WTC11 (cell line): ENCODE measurements at regions of chr10 and their contacts with region 1.

Region 1: DNA sequence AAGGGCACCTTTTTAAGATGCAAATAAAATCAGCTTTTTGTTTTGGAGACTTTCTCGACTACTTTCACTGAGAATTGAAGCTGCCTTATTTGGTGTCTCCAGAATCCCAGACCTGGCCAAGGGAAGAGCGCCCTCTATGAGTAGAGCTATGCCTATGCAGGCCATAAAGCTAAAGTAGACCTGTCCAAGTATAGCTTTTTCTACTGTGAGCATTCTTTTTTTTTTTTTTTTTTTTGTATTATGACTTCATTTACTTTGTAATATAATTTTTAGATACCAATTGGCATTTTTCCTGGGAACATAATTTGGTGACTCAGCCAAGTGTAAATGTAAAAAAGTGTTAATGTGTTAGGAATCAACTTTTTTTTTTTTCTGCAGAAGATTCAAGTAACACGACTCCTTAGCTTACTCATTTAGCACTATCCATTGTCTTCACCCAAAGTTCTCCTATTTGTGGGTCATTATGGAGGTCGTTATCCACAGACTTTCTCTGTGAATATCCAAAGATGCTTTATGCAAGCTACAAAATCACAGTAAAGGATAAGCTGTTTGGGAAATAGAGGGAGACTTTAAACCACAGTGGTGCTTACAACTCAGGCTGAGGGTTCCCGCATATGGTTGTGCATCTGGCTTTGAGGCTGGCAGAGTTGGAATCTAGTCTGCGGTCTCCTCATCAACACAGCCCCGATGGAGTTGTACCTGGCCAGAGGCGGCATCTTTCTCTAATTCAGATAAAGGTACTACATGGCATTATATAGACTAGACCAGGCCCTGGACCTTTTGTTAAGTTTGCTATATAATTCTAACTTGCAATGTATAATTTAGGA is 1040.2 kb upstream of the SORCS1 start:
- DNase-seq: peak; percentile 38
- ATAC-seq: peak; percentile 97
- H3K4me3 Mint-ChIP-seq: no peak overlapping the region
- H3K27ac Mint-ChIP-seq: no peak overlapping the region; the same call in 1 of the 2 replicates
- H3K4me1 Mint-ChIP-seq: peaks cover 18% of the 10 kb centered on the region
- H3K27me3 Mint-ChIP-seq: no peaks in the 10 kb centered on the region
- CTCF ChIP-seq: peak; percentile 85

Region 2: DNA sequence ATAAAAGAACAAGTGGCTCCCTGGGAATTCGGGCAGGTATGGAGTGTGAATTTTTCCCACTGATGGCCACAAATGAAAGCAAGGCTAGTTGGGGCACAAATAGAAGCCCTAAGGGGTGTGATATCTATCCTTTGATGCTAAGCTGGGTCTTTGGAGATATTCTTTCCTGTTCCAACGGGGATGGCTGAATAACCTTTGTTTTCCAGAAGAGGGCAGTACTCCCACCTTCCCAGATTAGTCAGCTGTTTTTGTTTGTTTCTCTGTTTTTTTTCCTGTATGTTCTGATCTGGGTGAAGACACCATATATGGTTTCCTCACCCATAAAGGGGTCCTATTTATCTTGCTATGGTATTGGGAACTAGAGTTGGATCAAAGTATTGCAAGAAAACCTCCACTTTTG is 92.5 kb before region 1 on chr10:
- CTCF ChIA-PET with region 1: interaction called, 59 read pairs
- POLR2A ChIA-PET with region 1: no interaction called
- DNase-seq: no peak
- ATAC-seq: peak; percentile 80
- H3K4me3 Mint-ChIP-seq: no peak overlapping the region
- H3K27ac Mint-ChIP-seq: no peak overlapping the region
- H3K4me1 Mint-ChIP-seq: peaks cover 26% of the 10 kb centered on the region
- H3K27me3 Mint-ChIP-seq: peaks cover 4% of the 10 kb centered on the region; the same call in 1 of the 2 replicates
- CTCF ChIP-seq: peak; percentile 33

Region 3: DNA sequence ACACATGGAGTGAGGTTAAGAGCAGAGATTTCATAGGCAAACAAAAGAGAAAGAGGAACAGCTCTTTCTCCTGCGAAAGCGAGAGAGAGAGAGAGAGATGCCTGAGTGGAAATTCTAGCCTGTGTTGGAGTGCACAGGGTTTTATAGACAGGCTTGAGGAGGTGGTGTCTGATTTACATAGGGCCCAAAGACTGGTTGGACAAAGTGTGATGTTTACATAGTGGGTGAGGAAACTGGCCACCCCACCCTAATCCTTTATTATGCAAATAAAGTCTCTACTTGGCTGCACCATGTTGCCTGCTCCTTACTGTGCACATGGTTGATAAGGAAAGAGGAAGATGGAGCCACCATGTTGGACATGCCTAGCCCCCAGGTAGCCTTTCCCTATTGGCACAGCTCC is 72.4 kb before region 1 on chr10:
- CTCF ChIA-PET with region 1: interaction called, 11 read pairs
- POLR2A ChIA-PET with region 1: no interaction called
- DNase-seq: no peak
- ATAC-seq: peak; percentile 44
- H3K4me3 Mint-ChIP-seq: no peak overlapping the region
- H3K27ac Mint-ChIP-seq: no peak overlapping the region
- H3K4me1 Mint-ChIP-seq: peaks cover 13% of the 10 kb centered on the region
- H3K27me3 Mint-ChIP-seq: no peaks in the 10 kb centered on the region
- CTCF ChIP-seq: no peak

Region 4: GRCh38 chr10:108147346-108147745 is 57.3 kb before region 1 on chr10:
- CTCF ChIA-PET with region 1: interaction called, 13 read pairs
- POLR2A ChIA-PET with region 1: no interaction called
- DNase-seq: no peak
- ATAC-seq: no peak
- H3K4me3 Mint-ChIP-seq: no peak overlapping the region
- H3K27ac Mint-ChIP-seq: no peak overlapping the region
- H3K4me1 Mint-ChIP-seq: peaks cover 17% of the 10 kb centered on the region
- H3K27me3 Mint-ChIP-seq: no peaks in the 10 kb centered on the region; the same call in 1 of the 2 replicates
- CTCF ChIP-seq: no peak